Left ventricle myocardium superior (tissue), 1 donor: ENCODE measurements at regions of chr12 and their contacts with region 1.

Region 1: DNA sequence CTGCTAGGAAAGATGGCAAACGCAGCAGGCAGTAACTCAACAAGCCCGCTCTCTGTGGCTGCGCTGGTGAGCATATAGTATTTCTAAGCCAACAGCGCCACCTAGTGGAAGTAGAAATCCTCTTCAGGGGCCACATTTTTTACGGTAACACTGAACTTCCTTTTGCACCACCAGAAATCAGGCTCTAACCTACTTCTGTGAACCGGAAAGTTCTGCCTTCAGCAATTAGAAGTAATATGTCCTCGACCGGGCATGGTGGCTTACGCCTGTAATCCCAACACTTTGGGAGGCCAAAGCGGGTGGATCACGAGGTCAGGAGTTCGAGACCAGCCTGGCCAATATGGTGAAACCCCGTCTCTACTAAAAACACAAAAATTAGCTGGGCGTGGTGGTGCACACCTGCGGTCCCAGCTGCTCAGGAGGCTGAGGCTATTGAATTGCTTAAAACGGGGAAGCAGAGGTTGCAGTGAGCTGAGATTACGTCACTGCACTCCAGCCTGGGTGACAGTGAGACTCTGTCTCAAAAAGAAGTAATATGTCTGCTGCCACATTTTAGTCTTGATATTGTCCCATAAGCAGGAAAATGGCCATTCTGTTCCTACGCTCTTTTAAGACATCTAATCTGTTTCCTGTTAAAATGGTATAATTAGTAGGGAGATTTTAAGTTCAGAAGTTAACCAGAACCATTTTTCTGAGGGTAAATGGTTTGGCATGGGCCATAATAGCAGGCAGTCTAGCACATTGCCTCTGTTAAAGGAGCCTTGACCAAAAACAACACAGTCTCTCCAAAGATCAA is 26.8 kb downstream of the APOBEC1 start:
- DNase-seq: peak; percentile 65
- ATAC-seq: peak; percentile 97

Region 2: DNA sequence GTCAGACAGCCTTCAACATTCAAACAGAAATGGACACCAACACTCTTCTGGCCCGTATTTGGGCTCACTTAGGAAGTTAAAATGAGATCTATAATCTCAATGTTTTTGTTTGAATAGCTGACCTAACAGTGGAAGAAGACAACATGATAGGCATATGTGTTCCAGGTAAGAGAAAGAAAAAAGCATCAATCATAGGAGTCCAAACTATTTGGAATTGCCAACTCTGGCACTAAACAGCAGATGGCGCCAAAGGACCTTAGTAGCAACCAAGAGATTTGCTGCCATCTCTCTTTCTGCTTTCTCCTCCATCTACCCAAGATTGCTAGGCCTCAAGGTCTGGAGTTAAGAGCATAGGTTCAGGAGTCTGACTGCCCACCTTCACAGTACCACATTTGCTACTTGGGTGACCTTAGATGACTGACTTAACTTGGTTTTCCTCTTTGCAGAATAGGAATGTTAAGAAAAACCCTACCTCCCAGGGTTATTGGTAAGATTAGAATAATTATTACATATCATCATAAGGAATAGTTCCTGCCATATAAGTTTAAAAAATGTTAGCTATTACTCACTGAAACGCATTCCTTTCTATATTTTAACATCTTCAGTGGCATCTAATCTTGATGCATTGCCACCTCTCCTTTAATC is 419.2 kb before region 1 on chr12:
- intact Hi-C with region 1: loop called (anchors 2 kb)
- DNase-seq: peak; percentile 52
- ATAC-seq: peak; percentile 48

Region 3: GRCh38 chr12:7460375-7461259 is 178.3 kb before region 1 on chr12:
- intact Hi-C with region 1: loop called (anchors 10 kb)
- DNase-seq: peak; percentile 37
- ATAC-seq: peak; percentile 69